ENCODE measurements at regions of chr6 and their contacts with region 1.

Region 1: GRCh38 chr6:106300944-106301343 is 24.6 kb downstream of the ATG5 start:
- DNase-seq: no peak
- ATAC-seq: no peak

Region 2: DNA sequence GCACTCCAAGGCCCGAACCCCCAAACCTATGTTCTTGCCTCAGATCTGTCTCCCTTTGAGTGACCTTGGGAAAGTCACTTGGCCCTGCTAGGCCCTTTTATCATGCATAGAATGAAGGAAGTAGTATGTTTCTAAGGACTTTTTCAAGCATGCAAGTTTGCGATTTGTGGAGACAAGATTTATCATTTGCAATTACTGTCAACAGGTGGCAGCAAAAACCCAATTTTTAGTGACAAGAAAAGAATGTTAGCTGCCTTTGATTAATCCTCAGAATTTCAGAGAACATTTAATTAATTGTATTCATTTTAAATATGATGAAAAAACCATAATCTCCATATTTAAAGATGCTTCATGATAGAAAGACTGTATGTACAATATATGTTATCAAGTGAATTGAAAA is 869.7 kb before region 1 on chr6:
- intact Hi-C with region 1: loop called in 1 of 2 experiments (anchors 10 kb)
- DNase-seq: no peak
- ATAC-seq: no peak

Region 3: DNA sequence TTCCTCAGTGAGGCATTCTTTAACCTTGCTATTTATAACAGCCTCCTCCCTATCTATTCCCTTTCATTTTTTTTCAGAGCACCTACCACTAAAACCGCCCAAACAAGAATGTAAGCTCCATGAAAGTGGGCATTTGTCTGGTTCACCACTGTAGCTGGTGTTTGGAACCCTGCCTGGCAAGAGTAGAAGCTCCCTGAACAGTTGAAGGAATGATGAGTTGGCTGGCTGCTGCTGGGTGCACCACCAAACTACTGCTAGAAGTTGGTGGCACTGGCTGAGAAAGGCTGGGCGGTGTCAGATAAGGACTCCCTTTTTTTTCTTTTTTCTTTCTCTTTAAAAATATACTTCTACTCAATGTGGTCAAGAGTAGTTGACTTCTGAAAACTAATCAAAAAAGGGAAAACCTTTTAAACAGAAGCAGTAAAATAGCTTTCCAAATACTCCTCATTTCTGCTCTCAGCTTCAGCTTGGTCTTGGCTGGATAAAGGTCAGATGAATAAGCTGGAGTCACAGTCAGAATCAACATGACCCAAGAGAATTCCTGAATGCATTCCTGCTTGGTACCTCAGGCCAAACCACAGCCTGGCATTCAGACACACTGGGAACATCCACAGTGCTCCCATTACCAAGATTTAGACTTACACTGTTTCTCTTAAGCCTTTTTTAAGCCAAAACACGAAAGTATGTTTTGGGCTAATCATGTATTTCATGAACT is 290.3 kb after region 1 on chr6:
- intact Hi-C with region 1: no loop called
- DNase-seq: no peak
- ATAC-seq: peak in 1 of 2 donors; percentile 30